ENCODE measurements at regions of chr6 and their contacts with region 1.

Region 1: DNA sequence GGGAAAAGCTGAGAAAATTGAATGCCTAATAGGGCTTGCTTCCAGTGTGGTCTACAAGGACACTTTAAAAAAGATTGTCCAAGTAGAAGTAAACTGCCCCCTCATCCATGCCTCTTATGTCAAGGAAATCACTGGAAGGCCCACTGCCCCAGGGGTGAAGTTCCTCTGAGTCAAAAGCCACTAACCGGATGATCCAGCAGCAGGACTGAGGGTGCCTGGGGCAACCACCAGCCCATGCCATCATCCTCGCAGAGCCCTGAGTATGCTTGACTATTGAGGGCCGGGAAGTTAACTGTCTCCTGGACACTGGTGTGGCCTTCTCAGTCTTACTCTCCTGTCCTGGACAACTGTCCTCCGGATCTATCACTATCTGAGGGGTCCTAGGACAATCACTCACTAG is 411.6 kb downstream of the TENT5A start:
- DNase-seq: no peak

Region 2: DNA sequence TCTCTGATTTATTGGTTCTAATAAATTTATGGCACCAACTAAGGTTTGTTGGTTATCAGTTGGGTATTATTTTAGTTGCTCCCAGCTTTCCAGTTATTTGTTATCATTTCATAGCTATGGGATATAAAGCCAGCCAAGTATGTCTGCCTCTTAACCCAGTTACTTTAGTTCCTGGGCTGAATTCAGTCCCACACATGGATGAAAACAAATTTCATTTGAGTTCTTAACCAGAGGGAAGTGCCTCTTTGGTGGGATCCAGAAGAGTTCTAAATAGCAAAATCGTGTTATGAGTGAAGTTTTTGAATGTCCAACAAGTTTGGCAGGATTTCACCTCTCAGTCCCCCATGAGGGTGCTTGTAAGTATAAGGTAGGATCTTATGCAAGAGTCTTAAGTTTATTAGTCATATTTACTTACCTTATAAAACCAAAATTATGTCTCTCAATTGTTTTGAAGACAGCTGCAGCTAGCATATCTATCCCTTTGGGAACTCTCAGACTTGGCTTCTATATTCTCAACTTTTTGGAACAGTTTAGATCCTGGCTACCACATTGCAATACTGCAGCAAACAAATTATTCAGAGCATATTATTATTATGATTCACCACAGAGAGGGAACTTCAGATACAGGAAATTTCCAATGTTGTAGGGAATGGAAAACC is 550.9 kb before region 1 on chr6:
- intact Hi-C with region 1: loop called in 1 of 2 experiments (anchors 5 kb)
- DNase-seq: no peak

Region 3: GRCh38 chr6:81023007-81023582 is 317.8 kb before region 1 on chr6:
- intact Hi-C with region 1: no loop called
- DNase-seq: no peak

Region 4: GRCh38 chr6:81384921-81385320 is 44.0 kb after region 1 on chr6:
- intact Hi-C with region 1: no loop called
- DNase-seq: no peak